ENCODE measurements at regions of chr6 and their contacts with region 1.

Region 1: GRCh38 chr6:9985481-9985880 is 429.4 kb downstream of the TFAP2A start:
- DNase-seq: no peak
- H3K4me3 ChIP-seq: no peak overlapping the region
- CTCF ChIP-seq: no peak
- POLR2A ChIP-seq: no peak

Region 2: DNA sequence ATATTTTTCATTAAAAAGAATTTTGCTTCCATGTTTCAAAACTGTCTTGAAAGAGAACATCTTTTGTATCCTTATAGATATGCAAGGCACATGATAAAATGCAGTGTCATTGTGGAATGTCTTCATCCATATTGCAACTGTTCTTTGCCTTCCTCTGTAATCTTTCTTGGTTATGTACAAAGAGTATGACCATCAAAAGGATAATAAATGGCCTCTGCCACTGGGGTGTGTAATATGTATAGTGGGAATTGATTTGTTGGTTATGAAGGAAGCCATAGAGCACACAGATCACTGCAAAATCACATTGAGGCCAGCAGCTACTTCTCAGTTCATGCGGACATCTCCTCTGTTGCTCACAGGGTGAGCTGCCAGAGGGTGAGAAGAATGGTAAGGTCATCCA is 274.1 kb before region 1 on chr6:
- intact Hi-C with region 1: loop called (anchors 2 kb)
- DNase-seq: no peak
- H3K4me3 ChIP-seq: no peak overlapping the region
- CTCF ChIP-seq: no peak
- POLR2A ChIP-seq: no peak

Region 3: GRCh38 chr6:9825526-9825925 is 160.0 kb before region 1 on chr6:
- intact Hi-C with region 1: no loop called
- DNase-seq: no peak
- H3K4me3 ChIP-seq: no peak overlapping the region
- CTCF ChIP-seq: no peak
- POLR2A ChIP-seq: no peak

Region 4: DNA sequence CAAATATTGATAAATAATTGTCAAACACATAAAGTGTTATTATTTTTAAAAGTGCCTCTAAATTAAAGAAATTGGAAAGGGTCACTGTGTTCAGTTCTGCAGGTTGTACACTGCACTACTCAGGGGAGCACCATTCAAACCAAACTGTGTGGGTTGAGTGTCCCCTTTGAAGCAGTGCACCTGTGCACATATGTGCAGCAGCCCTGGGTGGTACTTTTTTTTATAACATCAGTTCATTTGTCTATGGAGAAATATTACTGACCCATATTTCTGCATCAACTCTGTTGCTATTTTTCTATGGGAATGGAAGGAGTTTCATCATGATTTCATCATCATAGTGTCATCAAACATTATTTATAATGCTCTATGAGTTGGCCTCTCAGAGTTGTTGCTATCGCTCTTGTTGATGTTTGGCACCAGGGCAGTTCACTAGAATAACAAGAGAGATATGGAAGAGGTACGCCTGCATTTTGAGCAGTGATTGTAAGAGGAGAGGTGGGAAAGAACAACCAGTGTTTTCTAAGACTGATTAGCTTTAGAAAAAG is 28.2 kb before region 1 on chr6:
- intact Hi-C with region 1: no loop called
- DNase-seq: no peak
- H3K4me3 ChIP-seq: no peak overlapping the region
- CTCF ChIP-seq: no peak
- POLR2A ChIP-seq: no peak

Measured in lower leg skin (tissue), 4 donors.